Sigmoid colon (tissue), 7 donors: ENCODE measurements at regions of chr6 and their contacts with region 1.

Region 1: GRCh38 chr6:3281631-3282475 is 23.1 kb downstream of the PSMG4 start:
- DNase-seq: peak; percentile 66
- H3K4me3 ChIP-seq: no peak overlapping the region
- H3K27ac ChIP-seq: peak overlapping the region; percentile 38 to 75 (median 71)
- H3K4me1 ChIP-seq: peaks cover 0 to 55% (median 40%) of the 10 kb centered on the region in 4 donors
- H3K27me3 ChIP-seq: no peaks in the 10 kb centered on the region
- CTCF ChIP-seq: no peak
- EP300 ChIP-seq: no peak
- POLR2A ChIP-seq: no peak

Region 2: DNA sequence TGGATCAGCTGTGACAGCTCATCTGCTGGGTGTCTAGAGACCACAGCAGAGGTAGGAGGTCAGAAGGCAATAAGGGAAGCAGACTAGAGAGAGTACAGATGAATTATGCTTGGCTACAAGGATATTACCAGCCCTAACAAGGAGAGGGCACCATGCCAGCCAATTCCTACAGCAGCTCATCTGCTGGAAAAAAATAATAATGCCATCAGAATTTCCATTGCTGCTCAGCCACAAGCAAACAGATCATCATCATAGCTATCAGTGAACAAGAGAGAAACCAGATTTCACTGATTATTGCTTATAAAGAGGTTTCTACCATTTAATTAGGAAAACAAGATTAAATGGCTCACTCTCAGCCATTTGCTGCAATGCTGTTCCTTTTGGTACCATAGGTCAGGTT is 43.4 kb after region 1 on chr6:
- intact Hi-C with region 1: loop called (anchors 5 kb)
- DNase-seq: peak; percentile 63
- H3K4me3 ChIP-seq: no peak overlapping the region
- H3K27ac ChIP-seq: peak overlapping the region; percentile 3 to 56 (median 48)
- H3K4me1 ChIP-seq: peaks cover 0 to 55% (median 50%) of the 10 kb centered on the region in 4 donors
- H3K27me3 ChIP-seq: no peaks in the 10 kb centered on the region
- CTCF ChIP-seq: no peak
- EP300 ChIP-seq: peak in 1 of 4 donors; percentile 21
- POLR2A ChIP-seq: no peak